ENCODE measurements at regions of chr1 and their contacts with region 1.

Region 1: DNA sequence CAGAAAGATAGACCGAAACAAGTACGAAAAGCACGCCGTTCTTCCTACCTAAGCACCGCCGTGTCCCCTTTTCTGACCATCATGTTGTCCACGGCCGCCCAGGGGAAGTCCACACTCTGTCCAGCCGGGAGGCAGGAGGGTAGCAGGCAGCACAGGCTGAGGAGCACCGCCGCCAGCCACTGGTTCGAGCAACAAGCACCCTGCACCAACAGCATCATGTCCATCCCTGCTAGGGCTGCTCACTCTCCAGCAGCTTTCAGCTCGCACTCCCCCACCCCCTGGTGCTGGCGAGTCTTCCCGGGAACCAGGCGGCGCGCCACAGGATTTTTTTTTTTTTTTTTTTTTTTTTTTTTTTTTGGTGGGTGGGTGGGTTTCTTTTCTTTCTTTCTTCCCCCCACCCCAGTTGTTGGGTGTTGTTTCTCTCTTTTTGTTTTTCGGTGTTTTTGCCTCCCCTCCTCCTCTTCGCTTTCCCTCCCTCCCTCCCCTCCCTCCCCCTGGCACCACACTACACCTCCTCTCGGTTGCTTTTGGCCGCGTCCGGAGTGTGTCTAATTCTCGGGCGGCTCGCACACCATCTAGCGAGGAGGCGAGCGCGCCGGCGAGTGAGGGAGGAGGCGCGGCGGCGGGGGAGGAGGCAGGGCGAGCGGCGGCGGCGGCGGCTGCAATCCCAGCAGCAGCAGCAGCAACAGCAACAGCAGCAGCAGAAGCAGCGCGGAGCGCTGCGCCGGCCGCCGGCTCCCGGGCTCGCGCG is at the start of gene NEGR1:
- DNase-seq: peak; percentile 66
- H3K4me3 ChIP-seq: peak within 1 kb of the TSS; percentile 50
- H3K27ac ChIP-seq: peak within 1 kb of the TSS; percentile 74 to 81
- H3K4me1 ChIP-seq: no peaks in the 10 kb centered on the region
- H3K27me3 ChIP-seq: no peaks in the 10 kb centered on the region
- CTCF ChIP-seq: peak in 1 of 4 experiments; percentile 39
- POLR2A ChIP-seq: peak; percentile 24
- total RNA-seq, gene NEGR1: 2.3 to 7.6 TPM

Region 2: DNA sequence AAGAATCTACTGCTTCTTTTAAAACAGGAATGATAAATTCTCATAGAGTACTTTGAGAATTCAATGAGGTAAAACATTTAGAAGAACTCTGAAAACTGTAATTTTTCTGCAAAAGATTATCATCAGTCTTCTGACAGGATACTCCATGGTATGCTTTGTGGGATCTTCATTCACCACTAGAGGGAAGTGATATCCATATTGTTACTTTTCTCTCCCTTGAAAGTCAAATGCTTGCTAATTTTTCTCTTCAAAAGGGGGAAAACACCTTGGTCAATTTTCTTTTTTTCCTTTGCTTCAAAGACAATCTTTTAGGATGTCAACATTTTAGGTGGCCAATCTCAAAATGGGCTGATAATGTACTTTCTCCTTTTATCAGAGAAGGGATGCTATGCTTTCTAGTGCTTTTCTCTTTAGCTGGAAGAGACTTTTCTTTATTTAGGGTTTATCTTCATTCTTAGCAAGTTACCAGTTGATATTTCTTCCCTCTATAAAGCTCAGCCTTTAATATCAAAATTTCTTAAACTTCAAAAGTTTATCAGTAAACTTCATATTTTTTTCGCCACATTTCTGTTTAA is 95.6 kb before region 1 on chr1:
- intact Hi-C with region 1: loop called (anchors 2 kb)
- DNase-seq: no peak
- H3K4me3 ChIP-seq: no peak overlapping the region
- H3K27ac ChIP-seq: no peak overlapping the region
- H3K4me1 ChIP-seq: no peaks in the 10 kb centered on the region
- H3K27me3 ChIP-seq: no peaks in the 10 kb centered on the region
- CTCF ChIP-seq: peak in 1 of 4 experiments; percentile 39
- POLR2A ChIP-seq: no peak

Region 3: GRCh38 chr1:72229893-72230292 is 52.6 kb before region 1 on chr1:
- intact Hi-C with region 1: loop called (anchors 5 kb)
- DNase-seq: no peak
- H3K4me3 ChIP-seq: no peak overlapping the region
- H3K27ac ChIP-seq: no peak overlapping the region
- H3K4me1 ChIP-seq: no peaks in the 10 kb centered on the region
- H3K27me3 ChIP-seq: no peaks in the 10 kb centered on the region
- CTCF ChIP-seq: no peak
- POLR2A ChIP-seq: no peak

Region 4: GRCh38 chr1:72341661-72342060 is 59.2 kb after region 1 on chr1:
- intact Hi-C with region 1: no loop called
- DNase-seq: no peak
- H3K4me3 ChIP-seq: no peak overlapping the region
- H3K27ac ChIP-seq: no peak overlapping the region
- H3K4me1 ChIP-seq: no peaks in the 10 kb centered on the region
- H3K27me3 ChIP-seq: no peaks in the 10 kb centered on the region
- CTCF ChIP-seq: no peak
- POLR2A ChIP-seq: no peak

Measured in prostate gland (tissue), 2 donors.